Activated CD4-positive, alpha-beta memory T cell treated with anti-CD3 and anti-CD28 coated beads for 36 hours (primary cell): ENCODE measurements at regions of chr3 and their contacts with region 1.

Region 1: GRCh38 chr3:194134757-194135528 is 1.0 kb upstream of the HES1 start:
- DNase-seq: peak; percentile 91
- H3K4me3 Mint-ChIP-seq: peak overlapping the region; percentile 77
- H3K27ac Mint-ChIP-seq: peak overlapping the region; percentile 72
- H3K4me1 Mint-ChIP-seq: peaks cover 44% of the 10 kb centered on the region
- H3K27me3 Mint-ChIP-seq: peaks cover 68% of the 10 kb centered on the region

Region 2: GRCh38 chr3:192892981-192893700 is 1241.8 kb before region 1 on chr3:
- CTCF ChIA-PET with region 1: no interaction called
- POLR2A ChIA-PET with region 1: no interaction called
- intact Hi-C with region 1: loop called (anchors 10 kb)
- DNase-seq: peak; percentile 86
- H3K4me3 Mint-ChIP-seq: peak overlapping the region; percentile 24
- H3K27ac Mint-ChIP-seq: peak overlapping the region; percentile 80
- H3K4me1 Mint-ChIP-seq: peaks cover 82% of the 10 kb centered on the region
- H3K27me3 Mint-ChIP-seq: peaks cover 12% of the 10 kb centered on the region

Region 3: DNA sequence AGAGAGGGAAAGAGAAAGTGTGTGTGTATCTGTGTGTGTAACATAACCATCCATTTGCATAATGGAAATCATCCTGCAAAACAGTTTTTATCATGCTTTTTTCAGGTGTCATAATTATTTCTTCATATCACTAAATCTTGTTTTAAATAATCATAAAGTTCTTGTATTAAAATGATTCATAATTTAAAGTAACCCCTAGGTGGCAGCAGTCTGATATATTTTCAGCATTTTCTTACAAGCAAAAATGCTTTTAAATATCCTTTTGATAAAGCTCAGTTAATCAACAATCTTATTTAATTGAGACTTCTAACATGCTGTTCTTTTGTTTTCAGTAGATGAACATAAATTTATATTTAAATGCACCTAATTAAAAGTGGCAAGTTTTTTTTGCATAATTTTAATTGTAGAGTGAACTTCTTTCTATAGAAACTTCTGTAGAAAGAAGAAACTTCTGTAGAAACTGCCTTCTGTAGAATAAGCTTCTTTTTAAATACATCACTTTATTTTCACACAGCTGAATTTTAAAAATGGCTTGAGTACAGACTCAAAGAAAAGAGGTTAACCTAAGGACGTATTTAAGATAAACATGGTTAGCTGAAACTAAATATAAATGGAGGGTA is 469.5 kb before region 1 on chr3:
- CTCF ChIA-PET with region 1: no interaction called
- POLR2A ChIA-PET with region 1: no interaction called
- intact Hi-C with region 1: loop called (anchors 5 kb)
- DNase-seq: no peak
- H3K4me3 Mint-ChIP-seq: no peak overlapping the region
- H3K27ac Mint-ChIP-seq: no peak overlapping the region
- H3K4me1 Mint-ChIP-seq: no peaks in the 10 kb centered on the region
- H3K27me3 Mint-ChIP-seq: no peaks in the 10 kb centered on the region

Region 4: GRCh38 chr3:193768070-193768394 is 366.9 kb before region 1 on chr3:
- CTCF ChIA-PET with region 1: no interaction called
- POLR2A ChIA-PET with region 1: no interaction called
- intact Hi-C with region 1: no loop called
- DNase-seq: no peak
- H3K4me3 Mint-ChIP-seq: no peak overlapping the region
- H3K27ac Mint-ChIP-seq: no peak overlapping the region
- H3K4me1 Mint-ChIP-seq: no peaks in the 10 kb centered on the region
- H3K27me3 Mint-ChIP-seq: no peaks in the 10 kb centered on the region

Region 5: GRCh38 chr3:193788189-193788991 is 346.6 kb before region 1 on chr3:
- CTCF ChIA-PET with region 1: no interaction called
- POLR2A ChIA-PET with region 1: interaction called, 3 read pairs
- intact Hi-C with region 1: loop called (anchors 2 kb)
- DNase-seq: peak; percentile 35
- H3K4me3 Mint-ChIP-seq: no peak overlapping the region
- H3K27ac Mint-ChIP-seq: no peak overlapping the region
- H3K4me1 Mint-ChIP-seq: no peaks in the 10 kb centered on the region
- H3K27me3 Mint-ChIP-seq: peaks cover 5% of the 10 kb centered on the region

Region 6: GRCh38 chr3:193960487-193961274 is 174.3 kb before region 1 on chr3:
- CTCF ChIA-PET with region 1: no interaction called
- POLR2A ChIA-PET with region 1: no interaction called
- intact Hi-C with region 1: loop called (anchors 1 kb)
- DNase-seq: no peak
- H3K4me3 Mint-ChIP-seq: no peak overlapping the region
- H3K27ac Mint-ChIP-seq: no peak overlapping the region
- H3K4me1 Mint-ChIP-seq: peaks cover 26% of the 10 kb centered on the region
- H3K27me3 Mint-ChIP-seq: peaks cover 45% of the 10 kb centered on the region

Region 7: DNA sequence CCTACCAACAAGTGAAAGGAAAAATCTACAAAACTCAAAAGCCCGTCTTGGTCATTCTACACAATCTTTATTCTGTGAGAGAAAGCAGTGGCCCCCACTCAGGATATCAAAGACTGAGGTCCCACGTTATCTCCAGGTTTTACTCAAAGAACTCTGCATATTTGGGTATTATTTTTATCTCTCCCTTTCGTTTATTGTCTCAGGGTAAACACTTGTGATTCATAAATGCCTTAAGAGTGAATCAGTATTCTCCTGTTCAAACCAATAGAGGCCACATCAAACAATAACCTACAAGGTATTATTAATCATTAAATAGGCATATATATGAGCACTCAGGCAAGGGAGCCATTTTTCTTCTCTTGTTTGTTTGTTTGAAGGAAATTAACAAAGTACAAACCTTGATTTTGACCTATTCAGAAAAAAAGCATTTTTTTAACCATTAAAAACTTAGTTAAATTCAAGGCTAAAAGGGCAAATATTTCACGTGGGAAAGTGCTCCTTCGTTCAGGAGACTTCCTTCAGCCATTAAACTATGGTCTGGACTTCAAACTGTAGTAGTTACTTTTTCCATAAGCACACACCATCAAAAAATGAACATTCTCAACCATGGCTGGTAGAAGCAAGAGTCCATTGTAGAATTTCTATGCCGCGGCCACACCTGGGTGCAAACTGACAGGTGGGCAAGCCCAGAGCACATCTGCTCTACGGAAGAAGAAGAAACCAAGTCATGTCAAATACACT is 12.9 kb before region 1 on chr3:
- CTCF ChIA-PET with region 1: no interaction called
- POLR2A ChIA-PET with region 1: no interaction called
- intact Hi-C with region 1: no loop called
- DNase-seq: no peak
- H3K4me3 Mint-ChIP-seq: no peak overlapping the region
- H3K27ac Mint-ChIP-seq: no peak overlapping the region
- H3K4me1 Mint-ChIP-seq: no peaks in the 10 kb centered on the region
- H3K27me3 Mint-ChIP-seq: peaks cover 39% of the 10 kb centered on the region

Region 8: GRCh38 chr3:194255252-194256039 is 120.5 kb after region 1 on chr3:
- CTCF ChIA-PET with region 1: no interaction called
- POLR2A ChIA-PET with region 1: no interaction called
- intact Hi-C with region 1: loop called (anchors 5 kb)
- DNase-seq: peak; percentile 66
- H3K4me3 Mint-ChIP-seq: peak overlapping the region; percentile 27
- H3K27ac Mint-ChIP-seq: no peak overlapping the region
- H3K4me1 Mint-ChIP-seq: peaks cover 7% of the 10 kb centered on the region
- H3K27me3 Mint-ChIP-seq: peaks cover 4% of the 10 kb centered on the region

Region 9: GRCh38 chr3:194315088-194315964 is 180.4 kb after region 1 on chr3:
- CTCF ChIA-PET with region 1: interaction called, 13 read pairs
- POLR2A ChIA-PET with region 1: no interaction called
- intact Hi-C with region 1: loop called (anchors 1 kb)
- DNase-seq: peak; percentile 88
- H3K4me3 Mint-ChIP-seq: peak overlapping the region; percentile 59
- H3K27ac Mint-ChIP-seq: no peak overlapping the region
- H3K4me1 Mint-ChIP-seq: peaks cover 5% of the 10 kb centered on the region
- H3K27me3 Mint-ChIP-seq: peaks cover 27% of the 10 kb centered on the region